Sigmoid colon (tissue), 7 donors: ENCODE measurements at regions of chr1 and their contacts with region 1.

Region 1: DNA sequence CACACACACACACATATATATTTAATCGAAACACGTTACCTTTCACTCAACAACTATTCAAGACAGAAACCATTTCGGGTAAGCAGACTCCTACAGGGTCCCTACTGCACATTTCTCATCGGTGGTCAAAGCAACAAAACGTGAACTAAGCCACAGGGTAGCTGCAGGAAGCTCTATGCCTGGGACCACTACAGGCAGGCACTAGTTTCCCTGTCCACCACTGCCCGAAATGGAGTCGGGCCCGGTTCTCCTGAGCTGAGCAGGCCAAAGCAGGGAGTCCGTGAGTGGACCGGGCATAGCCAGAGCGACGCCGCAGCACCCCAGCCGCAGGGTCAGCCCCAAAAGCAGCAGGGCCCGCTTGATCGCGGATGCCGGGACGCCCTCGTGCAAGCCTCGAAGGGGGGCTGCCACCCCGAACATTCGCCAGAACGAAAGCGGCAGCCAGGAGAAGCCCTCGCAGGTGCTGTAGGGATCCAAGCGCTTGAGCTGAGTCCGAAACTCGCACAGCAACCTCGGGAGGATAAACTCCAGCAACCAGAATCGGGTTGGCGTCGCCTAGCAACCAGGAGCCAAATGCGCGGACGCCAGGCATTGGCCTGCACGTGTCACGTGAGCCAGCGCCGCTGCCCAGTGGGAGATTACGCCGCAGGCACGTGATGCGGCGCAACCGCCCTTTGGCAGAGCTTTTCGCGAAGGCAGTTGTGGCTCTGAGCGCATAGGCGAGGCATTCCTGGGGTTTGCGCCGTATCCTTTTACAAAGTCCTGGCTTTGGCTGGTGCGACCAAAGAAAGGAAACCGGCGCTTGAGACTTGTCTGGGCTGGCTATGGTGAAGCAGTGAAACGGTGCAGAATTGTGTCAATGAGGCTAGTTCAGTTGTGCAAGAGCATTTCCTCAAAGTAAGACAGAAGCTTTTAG is 13.9 kb upstream of the DDI2 start:
- DNase-seq: peak; percentile 99
- H3K4me3 ChIP-seq: peak overlapping the region; percentile 63 to 83 (median 76)
- H3K27ac ChIP-seq: peak overlapping the region; percentile 86 to 91 (median 88)
- H3K4me1 ChIP-seq: peaks cover 0 to 22% (median 16%) of the 10 kb centered on the region in 4 donors
- H3K27me3 ChIP-seq: no peaks in the 10 kb centered on the region
- CTCF ChIP-seq: no peak
- EP300 ChIP-seq: no peak
- POLR2A ChIP-seq: peak; percentile 36 to 38

Region 2: GRCh38 chr1:15345711-15346355 is 257.5 kb before region 1 on chr1:
- intact Hi-C with region 1: no loop called
- DNase-seq: peak; percentile 77
- H3K4me3 ChIP-seq: no peak overlapping the region
- H3K27ac ChIP-seq: no peak overlapping the region
- H3K4me1 ChIP-seq: peaks cover 0 to 42% (median 39%) of the 10 kb centered on the region in 4 donors
- H3K27me3 ChIP-seq: no peaks in the 10 kb centered on the region
- CTCF ChIP-seq: no peak
- EP300 ChIP-seq: no peak
- POLR2A ChIP-seq: no peak

Region 3: DNA sequence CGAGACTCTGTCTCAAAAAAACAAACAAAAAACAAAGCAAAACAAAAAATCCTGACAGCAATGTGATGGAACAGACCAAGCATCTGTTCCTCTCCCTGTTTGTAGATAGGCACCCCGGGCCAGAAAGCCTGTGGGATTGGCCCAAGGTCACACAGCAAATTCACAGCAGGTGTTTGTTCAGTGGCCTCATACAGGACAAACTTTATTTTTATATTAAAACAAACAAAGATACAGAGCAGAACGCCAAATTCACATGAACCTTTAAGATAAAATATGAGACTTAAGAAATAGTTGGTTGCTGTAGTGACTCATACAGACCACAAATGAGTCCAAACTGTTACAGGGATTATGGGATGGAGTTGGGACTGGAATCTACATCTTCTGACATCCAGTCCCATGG is 149.1 kb before region 1 on chr1:
- intact Hi-C with region 1: no loop called
- DNase-seq: no peak
- H3K4me3 ChIP-seq: no peak overlapping the region
- H3K27ac ChIP-seq: peak overlapping the region in 1 of 4 donors; percentile 43
- H3K4me1 ChIP-seq: peaks cover 0 to 7% (median 0%) of the 10 kb centered on the region in 4 donors
- H3K27me3 ChIP-seq: no peaks in the 10 kb centered on the region
- CTCF ChIP-seq: no peak
- EP300 ChIP-seq: no peak
- POLR2A ChIP-seq: no peak

Region 4: GRCh38 chr1:15741183-15741850 is 138.0 kb after region 1 on chr1:
- intact Hi-C with region 1: loop called (anchors 5 kb)
- DNase-seq: peak; percentile 91
- H3K4me3 ChIP-seq: no peak overlapping the region
- H3K27ac ChIP-seq: no peak overlapping the region
- H3K4me1 ChIP-seq: peaks cover 0 to 5% (median under 1%) of the 10 kb centered on the region in 4 donors
- H3K27me3 ChIP-seq: no peaks in the 10 kb centered on the region
- CTCF ChIP-seq: peak; percentile 77 to 93 (median 84)
- EP300 ChIP-seq: no peak
- POLR2A ChIP-seq: peak in 1 of 2 donors; percentile 27

Region 5: DNA sequence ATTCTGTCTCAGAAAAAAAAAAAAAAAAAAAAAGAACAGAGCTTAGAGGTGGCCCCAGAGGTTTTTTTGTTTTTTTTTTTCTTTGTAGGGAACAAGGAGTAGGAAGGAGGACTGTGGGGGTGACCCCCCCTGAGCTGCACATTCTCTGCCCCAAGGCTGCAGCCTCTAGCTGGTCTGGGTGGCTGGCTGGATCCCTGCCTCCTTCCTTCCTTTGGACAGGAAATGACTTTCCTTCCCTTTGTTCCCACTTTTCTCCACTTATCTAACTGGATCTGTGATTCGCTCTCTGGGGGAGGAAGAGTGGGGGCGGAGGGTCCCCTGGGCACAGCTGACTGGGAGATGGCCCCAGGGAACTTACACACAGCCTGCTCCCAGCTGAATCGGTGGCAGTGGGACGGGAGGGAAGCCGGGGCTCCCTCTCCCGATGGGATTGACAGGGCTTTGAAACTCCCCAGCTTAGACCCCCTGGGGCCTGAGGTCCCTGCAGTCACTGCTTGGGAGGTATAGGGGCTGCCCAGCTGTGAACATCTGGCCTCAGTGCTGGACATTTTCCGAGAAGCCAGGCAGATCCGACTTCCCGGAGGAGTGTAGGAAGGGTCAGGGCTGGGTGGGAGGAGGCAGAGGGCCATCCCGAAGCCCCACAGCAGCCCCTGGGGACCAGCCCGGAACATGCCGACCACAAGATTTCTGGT is 157.4 kb after region 1 on chr1:
- intact Hi-C with region 1: loop called (anchors 5 kb)
- DNase-seq: peak; percentile 82
- H3K4me3 ChIP-seq: peak overlapping the region in 3 of 4 donors; percentile 19 to 91 (median 84)
- H3K27ac ChIP-seq: peak overlapping the region; percentile 79 to 84 (median 81)
- H3K4me1 ChIP-seq: peaks cover 0 to 54% (median 46%) of the 10 kb centered on the region in 4 donors
- H3K27me3 ChIP-seq: peaks cover 0 to 13% (median 2%) of the 10 kb centered on the region in 3 donors
- CTCF ChIP-seq: no peak
- EP300 ChIP-seq: no peak
- POLR2A ChIP-seq: no peak